ENCODE measurements at regions of chr7 and their contacts with region 1.

Region 1: DNA sequence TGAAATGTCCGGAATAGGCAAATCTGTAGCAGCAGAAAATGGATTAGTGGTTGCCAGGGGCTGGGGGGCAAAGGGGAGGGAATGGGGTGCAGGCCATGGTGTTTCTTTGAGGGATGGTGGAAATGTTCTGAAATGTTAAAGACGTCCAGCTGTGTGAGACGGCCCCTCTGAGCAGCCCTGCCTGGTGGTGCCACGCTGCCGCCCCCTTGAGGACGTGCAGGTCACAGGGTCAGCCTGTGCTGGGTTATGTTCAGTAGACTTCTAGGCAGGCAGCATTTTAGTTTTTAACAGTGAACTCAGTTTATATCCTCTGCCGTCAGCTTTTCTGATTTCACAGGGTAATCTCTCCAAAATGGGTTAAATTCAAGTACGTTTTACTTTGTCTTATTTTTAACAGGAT is 9.4 kb downstream of the NUB1 start:
- DNase-seq: peak; percentile 78
- ATAC-seq: peak; percentile 32
- H3K4me3 Mint-ChIP-seq: peak overlapping the region; percentile 83
- H3K27ac Mint-ChIP-seq: peak overlapping the region; percentile 93
- H3K4me1 Mint-ChIP-seq: peaks cover 49% of the 10 kb centered on the region
- H3K27me3 Mint-ChIP-seq: no peaks in the 10 kb centered on the region

Region 2: DNA sequence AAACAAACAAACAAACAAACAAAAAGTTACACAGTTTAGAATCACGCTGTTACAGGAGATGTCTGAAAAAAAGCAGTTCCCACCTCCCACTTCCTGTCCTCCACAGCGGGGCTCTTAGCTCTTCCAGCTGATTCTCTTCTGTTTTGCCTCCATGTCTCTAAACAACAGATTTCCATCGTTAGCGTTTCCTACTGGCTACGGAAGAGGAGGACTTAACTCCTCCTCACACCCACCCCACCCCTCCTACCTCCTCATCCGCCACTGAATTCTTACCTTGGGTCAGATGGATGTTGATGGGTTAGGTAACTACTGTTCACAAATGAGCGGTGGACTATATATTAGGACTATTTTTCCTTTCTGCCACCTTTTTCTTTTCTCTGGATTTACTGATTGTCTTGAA is 46.2 kb before region 1 on chr7:
- CTCF ChIA-PET with region 1: interaction called, 42 read pairs
- DNase-seq: no peak
- ATAC-seq: no peak
- H3K4me3 Mint-ChIP-seq: peak overlapping the region; percentile 23
- H3K27ac Mint-ChIP-seq: no peak overlapping the region
- H3K4me1 Mint-ChIP-seq: peaks cover 17% of the 10 kb centered on the region
- H3K27me3 Mint-ChIP-seq: peaks cover 41% of the 10 kb centered on the region

Region 3: DNA sequence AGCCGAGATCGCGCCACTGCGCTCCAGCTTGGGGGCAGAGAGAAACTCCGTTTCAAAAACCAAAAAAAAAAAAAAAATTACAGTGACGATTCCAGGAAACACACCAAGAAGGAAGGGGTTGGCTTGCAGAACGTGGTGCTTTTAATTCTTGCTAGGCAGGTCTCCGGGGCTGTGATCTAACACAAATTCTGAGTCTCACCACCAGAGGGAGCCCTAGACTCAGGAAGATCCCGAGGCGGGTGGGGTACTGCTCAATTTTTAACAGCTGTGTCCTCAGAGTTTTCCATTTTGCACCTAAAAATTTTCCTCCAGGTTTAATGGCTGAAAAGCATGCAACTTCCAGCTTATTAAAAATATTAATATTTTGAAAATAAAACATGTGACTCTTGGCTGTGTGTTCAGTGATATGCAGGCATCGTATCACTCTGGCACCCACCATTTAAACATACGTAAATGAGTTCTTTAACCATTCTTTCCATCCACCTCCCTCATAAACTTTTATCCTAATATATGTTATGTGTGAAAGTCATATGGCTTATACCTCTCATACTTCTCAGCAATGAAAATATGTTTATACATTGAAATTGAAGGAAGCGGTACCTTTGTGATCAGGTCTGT is 35.9 kb before region 1 on chr7:
- CTCF ChIA-PET with region 1: interaction called, 141 read pairs
- DNase-seq: peak; percentile 88
- ATAC-seq: peak; percentile 92
- H3K4me3 Mint-ChIP-seq: peak overlapping the region; percentile 12
- H3K27ac Mint-ChIP-seq: peak overlapping the region; percentile 54
- H3K4me1 Mint-ChIP-seq: peaks cover 21% of the 10 kb centered on the region
- H3K27me3 Mint-ChIP-seq: no peaks in the 10 kb centered on the region

Region 4: GRCh38 chr7:151320263-151320845 is 30.7 kb before region 1 on chr7:
- CTCF ChIA-PET with region 1: interaction called, 141 read pairs
- DNase-seq: no peak
- ATAC-seq: no peak
- H3K4me3 Mint-ChIP-seq: no peak overlapping the region
- H3K27ac Mint-ChIP-seq: no peak overlapping the region
- H3K4me1 Mint-ChIP-seq: peaks cover 11% of the 10 kb centered on the region
- H3K27me3 Mint-ChIP-seq: peaks cover 14% of the 10 kb centered on the region

Region 5: DNA sequence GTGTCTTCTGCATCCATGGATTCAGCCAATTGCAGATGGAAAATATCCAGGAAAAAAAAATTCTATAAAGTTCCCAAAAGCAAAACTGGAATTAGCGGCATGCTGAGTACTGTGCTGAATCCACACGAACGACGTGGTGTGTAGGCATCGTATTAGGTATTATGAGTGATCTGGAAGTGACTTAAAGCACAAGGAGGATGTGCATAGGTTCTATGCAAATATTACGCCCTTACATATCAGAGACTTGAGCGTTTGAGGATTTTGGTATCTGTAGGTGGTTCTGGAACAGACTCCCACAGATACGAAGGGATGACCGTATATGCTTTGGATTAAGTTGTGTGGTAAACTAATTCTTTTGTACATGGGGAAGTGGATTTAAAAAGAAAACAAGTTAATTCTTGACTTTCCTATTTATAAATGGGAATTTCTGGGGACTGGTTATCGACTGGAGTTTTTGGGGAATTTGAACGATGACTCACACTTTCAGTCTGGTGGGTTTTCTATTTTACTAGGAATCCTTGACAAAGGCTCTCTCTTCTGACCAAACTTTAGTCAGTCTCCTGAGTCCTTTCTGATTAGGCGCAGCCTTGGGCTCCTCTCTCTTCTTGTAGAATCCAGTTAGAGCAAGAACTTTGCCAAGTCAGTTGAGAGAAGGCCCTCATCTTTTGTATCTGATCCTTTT is 14.9 kb before region 1 on chr7:
- CTCF ChIA-PET with region 1: interaction called, 54 read pairs
- DNase-seq: no peak
- ATAC-seq: no peak
- H3K4me3 Mint-ChIP-seq: no peak overlapping the region
- H3K27ac Mint-ChIP-seq: no peak overlapping the region
- H3K4me1 Mint-ChIP-seq: peaks cover 22% of the 10 kb centered on the region
- H3K27me3 Mint-ChIP-seq: peaks cover 2% of the 10 kb centered on the region

Region 6: GRCh38 chr7:151368136-151368571 is 17.1 kb after region 1 on chr7:
- CTCF ChIA-PET with region 1: interaction called, 14 read pairs
- DNase-seq: peak; percentile 84
- ATAC-seq: peak; percentile 99
- H3K4me3 Mint-ChIP-seq: no peak overlapping the region
- H3K27ac Mint-ChIP-seq: no peak overlapping the region
- H3K4me1 Mint-ChIP-seq: peaks cover 13% of the 10 kb centered on the region
- H3K27me3 Mint-ChIP-seq: no peaks in the 10 kb centered on the region

Region 7: DNA sequence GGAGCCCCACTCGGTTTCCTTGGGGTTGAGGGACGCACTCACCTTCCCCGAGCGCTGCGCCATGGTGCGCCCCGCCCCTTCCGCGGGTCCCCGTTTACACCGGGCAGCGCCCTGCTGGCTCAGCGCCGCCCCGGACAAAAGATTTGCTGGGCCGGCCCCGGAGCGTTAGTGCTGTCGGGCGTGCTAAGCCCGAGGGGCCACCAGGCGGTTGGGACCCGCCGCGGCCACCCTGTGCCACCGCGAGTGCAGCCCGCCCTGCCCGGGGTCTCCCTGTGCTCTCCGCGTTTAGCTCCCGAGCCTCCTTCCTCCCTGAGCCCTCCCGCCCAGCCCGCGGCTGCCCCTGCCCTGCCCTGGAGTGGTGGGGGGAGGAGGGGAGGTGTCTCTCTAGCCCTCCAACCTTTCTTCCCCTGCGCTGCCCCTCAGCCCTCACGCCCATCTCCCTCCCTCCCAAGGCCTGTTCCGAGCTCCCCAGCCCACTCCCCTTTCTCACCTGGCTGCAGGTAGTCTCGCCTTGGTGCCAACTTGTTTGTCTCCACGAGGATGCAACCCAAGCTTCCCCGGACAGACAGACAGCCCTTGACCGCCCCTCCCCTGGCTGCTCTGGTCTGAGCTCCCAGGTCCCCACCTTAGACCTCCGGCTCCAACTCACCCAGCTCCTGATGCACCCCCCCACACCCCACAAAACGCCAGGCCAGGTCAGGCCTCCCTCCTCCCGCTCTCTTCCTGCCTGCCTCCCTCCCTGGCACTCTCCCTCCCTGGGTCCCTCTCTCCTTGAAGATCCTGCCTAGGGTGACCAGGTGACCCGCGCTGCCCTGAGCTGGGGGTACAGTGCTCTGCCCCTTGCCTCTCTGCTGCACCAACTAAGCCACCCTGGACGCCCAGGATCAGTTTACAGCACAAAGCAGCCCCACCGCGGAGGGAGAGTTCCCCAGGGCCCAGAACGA is 89.1 kb after region 1 on chr7 and contains the start of gene CRYGN:
- CTCF ChIA-PET with region 1: interaction called, 11 read pairs
- DNase-seq: no peak
- ATAC-seq: peak; percentile 63
- H3K4me3 Mint-ChIP-seq: no peak within 1 kb of the TSS
- H3K27ac Mint-ChIP-seq: no peak within 1 kb of the TSS
- H3K4me1 Mint-ChIP-seq: peaks cover 17% of the 10 kb centered on the region
- H3K27me3 Mint-ChIP-seq: peaks cover 20% of the 10 kb centered on the region
- total RNA-seq, gene CRYGN: not detected

Measured in activated CD8-positive, alpha-beta memory T cell treated with anti-CD3 and anti-CD28 coated beads, Interleukin-2, amount 10 ng/mL, durations not matched to agents 7 days and 5 days (primary cell).